Naive thymus-derived CD4-positive, alpha-beta T cell (primary cell): ENCODE measurements at regions of chr9 and their contacts with region 1.

Region 1: DNA sequence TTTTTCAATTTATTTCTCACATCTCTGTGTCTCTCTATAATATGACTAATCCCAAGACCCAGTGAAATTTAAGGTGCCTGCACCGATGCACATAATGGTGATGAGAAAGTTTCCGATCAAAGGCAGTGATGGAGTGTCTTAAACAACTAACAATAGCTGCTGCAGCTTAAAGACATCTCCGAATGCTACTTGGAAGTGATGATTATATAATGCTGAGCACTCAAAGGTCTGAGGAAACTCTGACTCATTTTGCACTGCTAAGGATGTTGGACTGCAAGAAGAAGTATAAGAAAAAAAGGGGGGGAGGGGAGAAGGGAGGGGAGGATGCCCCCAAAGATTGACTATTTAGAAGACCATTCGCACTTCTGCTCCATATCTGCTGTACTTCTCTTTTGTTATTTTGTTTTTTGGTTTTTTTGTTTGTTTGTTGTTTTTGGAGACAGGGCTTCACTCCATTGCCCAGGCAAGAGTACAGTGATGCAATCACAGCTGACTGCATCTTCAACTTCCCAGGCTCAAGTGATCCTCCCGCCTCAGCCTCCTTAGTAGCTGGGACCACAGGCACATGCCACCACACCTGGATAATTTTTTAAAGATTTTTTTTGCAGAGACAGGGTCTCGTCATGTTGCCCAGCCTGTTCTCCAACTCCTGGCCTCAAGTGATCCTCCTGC is 192.2 kb downstream of the HSD17B3 start:
- DNase-seq: no peak
- ATAC-seq: no peak
- H3K4me3 ChIP-seq: no peak overlapping the region
- H3K4me3 Mint-ChIP-seq: no peak overlapping the region
- H3K27ac ChIP-seq: no peak overlapping the region
- H3K27ac Mint-ChIP-seq: no peak overlapping the region
- H3K4me1 ChIP-seq: no peaks in the 10 kb centered on the region
- H3K4me1 Mint-ChIP-seq: peaks cover 0 to 5% (median 0%) of the 10 kb centered on the region in 7 donors
- H3K27me3 ChIP-seq: peaks cover 0 to 3% of the 10 kb centered on the region in 2 donors
- H3K27me3 Mint-ChIP-seq: peaks cover 0 to 19% (median 15%) of the 10 kb centered on the region in 5 donors

Region 2: DNA sequence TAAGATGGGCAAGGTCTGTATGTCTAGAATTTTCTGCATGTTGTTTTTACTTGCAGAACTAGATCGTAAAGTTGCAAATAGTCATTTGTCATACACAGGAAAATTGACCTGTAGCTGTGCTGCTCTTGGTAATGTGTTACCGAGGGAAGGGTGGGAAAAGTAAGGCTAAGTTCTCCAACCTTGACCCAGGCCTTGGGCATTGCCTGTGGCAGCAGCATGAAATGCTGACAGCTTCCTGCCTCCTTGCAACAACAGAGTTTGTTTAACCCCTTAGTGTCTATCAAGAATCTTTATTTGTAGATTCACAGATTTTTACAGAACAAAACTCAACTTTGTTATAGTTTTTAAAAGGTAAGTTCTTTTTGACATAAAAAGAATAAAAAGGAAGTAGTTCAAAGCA is 186.0 kb before region 1 on chr9:
- CTCF ChIA-PET with region 1: no interaction called
- POLR2A ChIA-PET with region 1: no interaction called
- intact Hi-C with region 1: no loop called
- DNase-seq: no peak
- ATAC-seq: no peak
- H3K4me3 ChIP-seq: no peak overlapping the region
- H3K4me3 Mint-ChIP-seq: no peak overlapping the region
- H3K27ac ChIP-seq: no peak overlapping the region
- H3K27ac Mint-ChIP-seq: no peak overlapping the region
- H3K4me1 ChIP-seq: no peaks in the 10 kb centered on the region
- H3K4me1 Mint-ChIP-seq: peaks cover 0 to 10% (median 0%) of the 10 kb centered on the region in 7 donors
- H3K27me3 ChIP-seq: no peaks in the 10 kb centered on the region
- H3K27me3 Mint-ChIP-seq: no peaks in the 10 kb centered on the region

Region 3: DNA sequence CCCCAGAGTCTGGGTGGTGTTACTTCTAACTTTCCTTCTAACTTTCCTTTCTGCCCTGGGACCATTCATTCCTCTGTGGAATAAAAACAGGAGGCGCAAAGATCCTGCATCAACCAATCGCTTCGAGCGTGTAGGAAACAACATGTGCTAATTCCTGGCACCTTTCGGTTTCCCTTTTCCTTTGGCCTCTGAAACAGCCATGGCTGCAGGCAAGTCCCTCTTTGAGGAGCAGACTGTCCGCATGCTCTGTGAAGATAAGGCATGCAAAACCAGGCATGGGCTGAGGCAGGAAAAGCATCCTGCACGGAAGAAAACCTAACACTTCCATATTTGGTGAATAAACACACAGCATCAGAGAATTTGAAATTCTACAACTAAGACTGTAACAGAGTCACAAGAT is 63.8 kb after region 1 on chr9:
- CTCF ChIA-PET with region 1: no interaction called
- POLR2A ChIA-PET with region 1: no interaction called
- intact Hi-C with region 1: loop called in 1 of 2 experiments (anchors 2 kb)
- DNase-seq: no peak
- ATAC-seq: no peak
- H3K4me3 ChIP-seq: no peak overlapping the region
- H3K4me3 Mint-ChIP-seq: no peak overlapping the region
- H3K27ac ChIP-seq: no peak overlapping the region
- H3K27ac Mint-ChIP-seq: peak overlapping the region in 1 of 9 donors; percentile 25
- H3K4me1 ChIP-seq: no peaks in the 10 kb centered on the region
- H3K4me1 Mint-ChIP-seq: no peaks in the 10 kb centered on the region
- H3K27me3 ChIP-seq: no peaks in the 10 kb centered on the region
- H3K27me3 Mint-ChIP-seq: peaks cover 14 to 44% (median 22%) of the 10 kb centered on the region in 5 donors

Region 4: DNA sequence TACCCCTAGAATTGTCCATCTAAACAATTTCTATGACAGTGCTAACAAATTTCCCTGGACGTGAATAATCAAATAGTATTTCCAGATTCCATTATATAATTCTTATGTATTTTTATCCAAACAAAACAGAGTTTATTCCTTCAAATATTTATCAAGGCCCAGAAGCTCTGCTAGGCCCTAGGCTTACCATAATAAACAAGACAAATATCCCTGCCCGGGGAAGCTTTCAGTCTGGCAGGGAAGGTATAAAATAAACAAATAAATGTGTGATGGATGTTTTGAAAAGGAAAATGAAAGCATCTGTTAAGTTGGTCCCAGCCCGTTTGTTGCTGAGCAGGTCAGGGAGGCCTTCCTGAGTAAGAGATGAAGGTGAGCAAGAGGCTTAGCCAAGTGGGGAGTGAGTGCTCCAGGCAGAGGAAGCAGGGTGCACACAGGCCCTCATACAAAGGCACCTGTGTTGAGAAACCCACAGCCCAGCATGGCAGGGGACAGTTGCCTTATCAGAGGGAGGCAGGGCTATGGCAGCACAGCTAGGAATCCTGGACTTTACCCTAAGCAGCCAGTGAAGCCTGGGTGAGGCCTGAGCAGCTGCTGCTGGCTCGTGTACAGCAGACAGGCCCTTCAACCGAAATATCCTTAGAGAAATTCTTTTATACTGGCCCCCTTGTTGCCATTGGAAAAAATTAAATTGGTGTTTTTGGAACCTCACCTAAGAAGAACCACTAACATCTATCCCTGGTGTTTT is 281.4 kb after region 1 on chr9:
- CTCF ChIA-PET with region 1: no interaction called
- POLR2A ChIA-PET with region 1: no interaction called
- intact Hi-C with region 1: no loop called
- DNase-seq: no peak
- ATAC-seq: no peak
- H3K4me3 ChIP-seq: no peak overlapping the region
- H3K4me3 Mint-ChIP-seq: peak overlapping the region in 3 of 10 donors; percentile 43 to 58 (median 46)
- H3K27ac ChIP-seq: no peak overlapping the region
- H3K27ac Mint-ChIP-seq: peak overlapping the region in 4 of 9 donors; percentile 26 to 82 (median 42)
- H3K4me1 ChIP-seq: peaks cover 0 to 3% of the 10 kb centered on the region in 2 donors
- H3K4me1 Mint-ChIP-seq: peaks cover 0 to 22% (median 0%) of the 10 kb centered on the region in 7 donors
- H3K27me3 ChIP-seq: no peaks in the 10 kb centered on the region
- H3K27me3 Mint-ChIP-seq: no peaks in the 10 kb centered on the region